BJ (cell line): ENCODE measurements at regions of chr3 and their contacts with region 1.

Region 1: GRCh38 chr3:52827441-52827840 is 3.0 kb downstream of the ITIH4 start:
- DNase-seq: no peak
- H3K4me3 ChIP-seq: no peak overlapping the region
- H3K27me3 ChIP-seq: no peaks in the 10 kb centered on the region
- CTCF ChIP-seq: no peak

Region 2: DNA sequence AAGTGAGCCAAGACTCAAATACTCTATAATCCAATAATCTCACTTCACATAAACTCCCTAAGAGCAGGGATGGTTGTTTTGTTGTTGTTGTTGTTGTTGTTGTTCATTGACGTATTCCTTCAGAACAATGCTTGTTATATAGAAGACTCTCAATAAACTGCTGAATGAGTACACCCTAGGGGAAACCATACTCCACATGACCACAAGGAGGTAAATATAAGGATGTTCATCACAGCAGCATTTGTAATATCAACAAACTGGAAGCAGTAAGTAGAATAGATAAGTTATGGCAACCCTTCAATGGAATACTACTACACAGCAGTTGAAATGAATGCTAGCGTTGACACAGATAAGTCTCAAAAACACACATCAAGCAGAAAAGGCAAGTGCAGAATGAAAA is 132.3 kb after region 1 on chr3:
- CTCF ChIA-PET with region 1: no interaction called
- POLR2A ChIA-PET with region 1: interaction called, 15 read pairs
- DNase-seq: no peak
- H3K4me3 ChIP-seq: no peak overlapping the region
- H3K27me3 ChIP-seq: no peaks in the 10 kb centered on the region
- CTCF ChIP-seq: no peak